Naive thymus-derived CD4-positive, alpha-beta T cell (primary cell): ENCODE measurements at regions of chr6 and their contacts with region 1.

Region 1: GRCh38 chr6:119313937-119314884 is 35.4 kb downstream of the MAN1A1 start:
- DNase-seq: peak in 7 of 9 donors; percentile 17 to 49 (median 38)
- ATAC-seq: peak; percentile 72
- H3K4me3 ChIP-seq: peak overlapping the region; percentile 22
- H3K4me3 Mint-ChIP-seq: peak overlapping the region; percentile 57 to 83 (median 73)
- H3K27ac ChIP-seq: peak overlapping the region; percentile 40
- H3K27ac Mint-ChIP-seq: peak overlapping the region; percentile 68 to 97 (median 85)
- H3K4me1 ChIP-seq: peaks cover 27 to 43% of the 10 kb centered on the region in 2 donors
- H3K4me1 Mint-ChIP-seq: peaks cover 27 to 69% (median 39%) of the 10 kb centered on the region in 7 donors
- H3K27me3 ChIP-seq: no peaks in the 10 kb centered on the region
- H3K27me3 Mint-ChIP-seq: no peaks in the 10 kb centered on the region

Region 2: GRCh38 chr6:119147101-119148053 is 166.8 kb before region 1 on chr6:
- CTCF ChIA-PET with region 1: no interaction called
- POLR2A ChIA-PET with region 1: no interaction called
- intact Hi-C with region 1: loop called in 1 of 2 experiments (anchors 10 kb)
- DNase-seq: peak in 1 of 9 donors; percentile 51
- ATAC-seq: peak; percentile 79
- H3K4me3 ChIP-seq: no peak overlapping the region
- H3K4me3 Mint-ChIP-seq: peak overlapping the region in 1 of 10 donors; percentile 22
- H3K27ac ChIP-seq: no peak overlapping the region
- H3K27ac Mint-ChIP-seq: peak overlapping the region in 1 of 9 donors; percentile 68
- H3K4me1 ChIP-seq: no peaks in the 10 kb centered on the region
- H3K4me1 Mint-ChIP-seq: peaks cover 7 to 41% (median 10%) of the 10 kb centered on the region in 7 donors
- H3K27me3 ChIP-seq: no peaks in the 10 kb centered on the region
- H3K27me3 Mint-ChIP-seq: peaks cover 0 to 4% (median 0%) of the 10 kb centered on the region in 5 donors

Region 3: GRCh38 chr6:119267126-119267905 is 46.9 kb before region 1 on chr6:
- CTCF ChIA-PET with region 1: no interaction called
- POLR2A ChIA-PET with region 1: no interaction called
- intact Hi-C with region 1: loop called in 1 of 2 experiments (anchors 10 kb)
- DNase-seq: peak in 2 of 9 donors; percentile 6 to 18
- ATAC-seq: peak; percentile 68
- H3K4me3 ChIP-seq: no peak overlapping the region
- H3K4me3 Mint-ChIP-seq: peak overlapping the region in 4 of 10 donors; percentile 3 to 29 (median 7)
- H3K27ac ChIP-seq: no peak overlapping the region
- H3K27ac Mint-ChIP-seq: peak overlapping the region in 4 of 9 donors; percentile 2 to 20 (median 4)
- H3K4me1 ChIP-seq: peaks cover 0 to 11% of the 10 kb centered on the region in 2 donors
- H3K4me1 Mint-ChIP-seq: peaks cover 8 to 30% (median 26%) of the 10 kb centered on the region in 7 donors
- H3K27me3 ChIP-seq: no peaks in the 10 kb centered on the region
- H3K27me3 Mint-ChIP-seq: no peaks in the 10 kb centered on the region

Region 4: GRCh38 chr6:119294984-119295383 is 19.2 kb before region 1 on chr6:
- CTCF ChIA-PET with region 1: no interaction called
- POLR2A ChIA-PET with region 1: interaction called, 4 read pairs
- intact Hi-C with region 1: loop called in 1 of 2 experiments (anchors 1 kb)
- DNase-seq: no peak
- ATAC-seq: no peak
- H3K4me3 ChIP-seq: no peak overlapping the region
- H3K4me3 Mint-ChIP-seq: peak overlapping the region in 1 of 10 donors; percentile 2
- H3K27ac ChIP-seq: no peak overlapping the region
- H3K27ac Mint-ChIP-seq: peak overlapping the region in 1 of 9 donors; percentile 54
- H3K4me1 ChIP-seq: no peaks in the 10 kb centered on the region
- H3K4me1 Mint-ChIP-seq: peaks cover 0 to 32% (median 7%) of the 10 kb centered on the region in 7 donors
- H3K27me3 ChIP-seq: no peaks in the 10 kb centered on the region
- H3K27me3 Mint-ChIP-seq: no peaks in the 10 kb centered on the region